ENCODE measurements at regions of chr1 and their contacts with region 1.

Region 1: DNA sequence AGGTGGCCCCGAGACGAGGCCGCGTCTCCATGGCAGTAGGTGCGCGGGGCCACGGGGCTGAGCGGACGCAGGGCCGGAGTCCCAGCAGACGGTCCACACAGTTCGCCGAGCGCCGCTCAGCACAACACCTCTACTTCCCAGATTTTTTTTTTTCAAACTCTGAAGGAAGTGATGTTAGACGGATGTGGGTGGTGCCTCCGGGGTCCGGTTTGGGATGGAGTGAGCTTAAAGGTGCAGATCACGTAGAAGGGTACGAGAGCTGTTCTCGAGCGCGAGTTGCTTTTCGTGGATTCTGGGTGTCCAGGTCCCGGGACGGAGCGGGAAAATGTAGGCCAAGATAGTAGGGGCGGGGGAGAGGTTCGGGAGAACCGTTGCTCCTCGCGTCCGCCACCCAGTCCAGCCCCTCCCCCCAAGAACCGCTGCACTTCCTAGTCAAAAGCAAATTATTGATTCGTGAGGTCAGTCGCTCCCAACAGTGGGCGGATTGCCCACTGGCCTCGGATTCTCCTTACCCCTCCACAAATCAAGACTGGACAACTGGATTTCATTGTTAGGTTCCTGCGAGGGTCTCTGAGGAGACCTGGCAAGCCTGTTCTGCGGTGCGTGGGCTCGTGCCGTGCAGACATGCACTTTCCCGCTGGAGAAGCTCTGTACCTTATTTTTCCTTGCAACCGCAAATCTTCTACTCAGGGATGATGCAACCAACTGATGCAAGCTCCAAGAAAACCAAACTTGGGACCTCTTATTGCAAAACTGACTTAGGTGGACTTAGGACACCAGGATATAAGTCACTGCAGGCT is at the start of gene TXNDC12:
- DNase-seq: peak; percentile 90
- ATAC-seq: peak; percentile 86
- H3K4me3 ChIP-seq: peak within 1 kb of the TSS; percentile 100
- H3K27ac ChIP-seq: peak within 1 kb of the TSS; percentile 100
- H3K4me1 ChIP-seq: peaks cover 25% of the 10 kb centered on the region
- H3K27me3 ChIP-seq: no peaks in the 10 kb centered on the region
- CTCF ChIP-seq: no peak
- total RNA-seq, gene TXNDC12: 77.5 TPM

Region 2: GRCh38 chr1:51578383-51579082 is 476.7 kb before region 1 on chr1:
- CTCF ChIA-PET with region 1: no interaction called
- POLR2A ChIA-PET with region 1: no interaction called
- in situ Hi-C with region 1: no loop called
- intact Hi-C with region 1: no loop called
- DNase-seq: no peak
- ATAC-seq: peak; percentile 77
- H3K4me3 ChIP-seq: no peak overlapping the region
- H3K27ac ChIP-seq: peak overlapping the region; percentile 68; the same call in 1 of the 2 replicates
- H3K4me1 ChIP-seq: peaks cover 42% of the 10 kb centered on the region
- H3K27me3 ChIP-seq: no peaks in the 10 kb centered on the region
- CTCF ChIP-seq: no peak

Region 3: GRCh38 chr1:51897699-51898031 is 157.6 kb before region 1 on chr1:
- CTCF ChIA-PET with region 1: interaction called, 12 read pairs
- POLR2A ChIA-PET with region 1: interaction called, 3 read pairs
- in situ Hi-C with region 1: no loop called
- intact Hi-C with region 1: no loop called
- DNase-seq: peak; percentile 78
- ATAC-seq: peak; percentile 69
- H3K4me3 ChIP-seq: no peak overlapping the region
- H3K27ac ChIP-seq: no peak overlapping the region
- H3K4me1 ChIP-seq: peaks cover 3% of the 10 kb centered on the region; the same call in 1 of the 2 replicates
- H3K27me3 ChIP-seq: no peaks in the 10 kb centered on the region
- CTCF ChIP-seq: no peak